CD4-positive, alpha-beta memory T cell (primary cell): ENCODE measurements at regions of chr4 and their contacts with region 1.

Region 1: GRCh38 chr4:42865572-42866189 is 26.8 kb upstream of the GRXCR1 start:
- DNase-seq: peak; percentile 41 to 55 (median 52)
- H3K4me3 ChIP-seq: no peak overlapping the region
- H3K4me3 Mint-ChIP-seq: no peak overlapping the region
- H3K27ac ChIP-seq: no peak overlapping the region
- H3K27ac Mint-ChIP-seq: no peak overlapping the region
- H3K4me1 ChIP-seq: no peaks in the 10 kb centered on the region
- H3K4me1 Mint-ChIP-seq: no peaks in the 10 kb centered on the region
- H3K27me3 ChIP-seq: peaks cover 2% of the 10 kb centered on the region
- H3K27me3 Mint-ChIP-seq: peaks cover 5 to 15% of the 10 kb centered on the region in 2 donors

Region 2: GRCh38 chr4:41963105-41963504 is 902.6 kb before region 1 on chr4:
- CTCF ChIA-PET with region 1: no interaction called
- POLR2A ChIA-PET with region 1: no interaction called
- intact Hi-C with region 1: loop called (anchors 10 kb)
- DNase-seq: peak in 3 of 5 donors; percentile 14 to 22 (median 19)
- H3K4me3 ChIP-seq: no peak overlapping the region
- H3K4me3 Mint-ChIP-seq: no peak overlapping the region
- H3K27ac ChIP-seq: no peak overlapping the region
- H3K27ac Mint-ChIP-seq: no peak overlapping the region
- H3K4me1 ChIP-seq: no peaks in the 10 kb centered on the region
- H3K4me1 Mint-ChIP-seq: no peaks in the 10 kb centered on the region
- H3K27me3 ChIP-seq: no peaks in the 10 kb centered on the region
- H3K27me3 Mint-ChIP-seq: no peaks in the 10 kb centered on the region